ENCODE measurements at regions of chr4 and their contacts with region 1.

Region 1: GRCh38 chr4:185203486-185204237 is at the start of gene CFAP97:
- DNase-seq: peak; percentile 73 to 98 (median 87)

Region 2: GRCh38 chr4:185142912-185143595 is 60.6 kb before region 1 on chr4 and contains the start of gene SLC25A4:
- intact Hi-C with region 1: loop called (anchors 5 kb)
- DNase-seq: peak; percentile 83 to 99 (median 92)

Region 3: GRCh38 chr4:185395956-185396723 is 192.5 kb after region 1 on chr4:
- intact Hi-C with region 1: loop called (anchors 5 kb)
- DNase-seq: peak; percentile 93 to 100 (median 97)

Region 4: GRCh38 chr4:185425647-185426352 is 222.1 kb after region 1 on chr4 and contains the start of gene UFSP2:
- intact Hi-C with region 1: loop called (anchors 10 kb)
- DNase-seq: peak; percentile 79 to 98 (median 88)

Measured in posterior cingulate gyrus (tissue), 11 donors.